K562 (cell line): ENCODE measurements at regions of chr1 and their contacts with region 1.

Region 1: DNA sequence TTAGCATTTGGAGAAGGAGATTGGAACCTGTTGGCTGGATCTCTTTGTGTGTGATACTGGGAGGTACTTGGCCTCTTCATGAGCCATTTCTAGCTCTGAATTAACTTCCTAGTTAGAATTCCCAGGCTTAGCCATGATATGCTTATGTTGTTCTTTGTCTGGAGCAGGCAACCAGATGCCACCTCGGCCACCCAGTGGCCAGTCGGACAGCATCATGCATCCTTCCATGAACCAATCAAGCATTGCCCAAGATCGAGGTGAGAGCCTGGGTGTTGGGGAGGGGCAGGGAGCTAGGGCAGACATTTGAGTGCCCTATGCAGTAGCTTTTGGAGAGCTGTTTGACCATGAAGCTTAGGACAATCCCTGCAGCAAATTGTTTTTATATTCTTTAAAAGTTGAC is 26.5 kb upstream of the PIGV start:
- DNase-seq: no peak
- ATAC-seq: no peak; the same call in 2 of the 3 replicates
- H3K4me3 ChIP-seq: no peak overlapping the region
- H3K27ac ChIP-seq: no peak overlapping the region
- H3K4me1 ChIP-seq: no peaks in the 10 kb centered on the region
- H3K27me3 ChIP-seq: no peaks in the 10 kb centered on the region
- CTCF ChIP-seq: no peak
- EP300 ChIP-seq: no peak
- POLR2A ChIP-seq: no peak
- RAD21 ChIP-seq: no peak

Region 2: GRCh38 chr1:26749458-26749857 is 11.8 kb before region 1 on chr1:
- CTCF ChIA-PET with region 1: no interaction called
- POLR2A ChIA-PET with region 1: interaction called, 15 read pairs
- in situ Hi-C with region 1: no loop called
- intact Hi-C with region 1: no loop called
- DNase-seq: no peak
- ATAC-seq: no peak
- H3K4me3 ChIP-seq: no peak overlapping the region
- H3K27ac ChIP-seq: no peak overlapping the region
- H3K4me1 ChIP-seq: peaks cover 3 to 10% of the 10 kb centered on the region in 2 experiments; a peak in 3 of 5 replicates
- H3K27me3 ChIP-seq: no peaks in the 10 kb centered on the region
- CTCF ChIP-seq: no peak
- EP300 ChIP-seq: no peak
- POLR2A ChIP-seq: no peak
- RAD21 ChIP-seq: no peak

Region 3: DNA sequence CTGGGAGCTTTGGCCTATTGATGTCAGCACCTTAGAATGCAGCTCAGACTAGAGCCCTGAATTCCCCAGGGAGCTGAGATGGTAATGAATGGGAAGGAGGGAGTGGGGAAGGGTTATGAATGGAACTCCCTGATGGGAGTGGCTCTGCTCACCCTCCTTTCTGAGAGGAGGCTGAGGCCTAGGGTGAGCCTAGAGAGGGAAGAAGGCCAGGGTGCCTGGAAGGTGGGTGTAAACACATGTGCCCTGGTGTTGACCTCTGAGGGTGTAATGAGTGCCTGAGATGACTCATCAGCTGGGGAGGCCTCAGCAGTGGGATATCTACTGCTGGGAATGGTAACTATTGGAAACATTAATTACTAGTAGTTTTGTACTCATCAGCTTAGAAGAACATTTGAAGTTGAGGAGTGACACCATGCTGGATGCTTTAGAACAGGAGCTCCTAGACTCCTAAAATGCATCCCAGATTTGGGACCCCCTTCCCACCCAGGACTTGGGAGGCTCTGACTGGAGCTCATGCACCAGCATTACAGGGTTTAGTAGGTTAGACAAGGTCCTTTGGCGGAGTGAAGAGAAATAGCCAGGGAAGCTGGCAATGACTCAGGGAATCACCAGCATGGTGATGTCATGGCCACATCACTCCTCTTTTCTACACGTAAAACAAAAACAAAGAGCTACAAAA is 10.6 kb after region 1 on chr1:
- CTCF ChIA-PET with region 1: no interaction called
- POLR2A ChIA-PET with region 1: interaction called, 99 read pairs
- in situ Hi-C with region 1: no loop called
- intact Hi-C with region 1: no loop called
- DNase-seq: peak; percentile 87 to 96 (median 93)
- ATAC-seq: peak; percentile 96
- H3K4me3 ChIP-seq: no peak overlapping the region
- H3K27ac ChIP-seq: peak overlapping the region; percentile 76
- H3K4me1 ChIP-seq: peaks cover 21 to 22% of the 10 kb centered on the region in 2 experiments
- H3K27me3 ChIP-seq: no peaks in the 10 kb centered on the region
- CTCF ChIP-seq: no peak
- EP300 ChIP-seq: peak; percentile 72
- POLR2A ChIP-seq: no peak; the same call in none of the 2 replicates
- RAD21 ChIP-seq: peak; percentile 10 to 38; a peak in 2 of 4 replicates